K562 (cell line): ENCODE measurements at regions of chr16 and their contacts with region 1.

Region 1: GRCh38 chr16:27154705-27155521 is 48.4 kb upstream of the KDM8 start:
- DNase-seq: peak; percentile 68 to 87 (median 82)
- ATAC-seq: peak; percentile 95
- H3K4me3 ChIP-seq: no peak overlapping the region
- H3K27ac ChIP-seq: no peak overlapping the region
- H3K4me1 ChIP-seq: no peaks in the 10 kb centered on the region
- H3K27me3 ChIP-seq: peaks cover 0 to 15% of the 10 kb centered on the region in 2 experiments; a peak in 2 of 5 replicates
- CTCF ChIP-seq: peak; percentile 86 to 92 (median 87)
- EP300 ChIP-seq: no peak
- POLR2A ChIP-seq: no peak
- RAD21 ChIP-seq: peak; percentile 65 to 84

Region 2: DNA sequence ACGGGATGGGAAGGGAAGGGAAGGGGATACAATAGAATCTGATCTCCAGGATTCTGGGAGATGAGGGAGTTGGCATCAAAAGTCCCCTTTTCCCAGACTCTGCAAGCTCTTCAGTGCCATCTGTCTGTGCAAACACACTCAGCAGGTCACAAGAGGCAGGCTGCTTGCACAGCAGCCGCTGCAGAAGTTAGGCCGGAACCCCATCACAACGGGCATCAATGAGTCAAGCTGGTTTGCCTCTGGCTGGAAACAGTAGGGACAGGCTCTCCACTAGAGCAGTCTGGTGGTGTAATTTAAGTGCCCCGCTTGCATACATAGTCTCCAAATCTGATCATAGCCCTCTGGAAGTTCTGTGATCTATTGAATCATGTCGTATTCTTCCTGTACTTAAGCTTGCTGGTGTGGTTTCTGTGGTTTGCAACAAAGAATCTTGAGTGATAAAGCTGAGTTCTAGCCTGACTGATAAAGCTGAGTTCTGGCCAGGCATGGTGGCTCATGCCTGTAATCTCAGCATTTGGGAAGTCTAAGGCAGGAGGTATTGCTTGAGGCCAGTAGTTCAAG is 14.7 kb after region 1 on chr16:
- CTCF ChIA-PET with region 1: no interaction called
- POLR2A ChIA-PET with region 1: no interaction called
- in situ Hi-C with region 1: no loop called
- intact Hi-C with region 1: no loop called
- DNase-seq: no peak
- ATAC-seq: no peak
- H3K4me3 ChIP-seq: no peak overlapping the region
- H3K27ac ChIP-seq: no peak overlapping the region
- H3K4me1 ChIP-seq: no peaks in the 10 kb centered on the region; a peak in 1 of 5 replicates
- H3K27me3 ChIP-seq: peaks cover 2 to 29% of the 10 kb centered on the region in 2 experiments; a peak in 4 of 5 replicates
- CTCF ChIP-seq: 0 out of 6 replicates have a peak, but pooled peaks of 2 of the 3 experiments have one; percentile 17 to 18
- EP300 ChIP-seq: no peak
- POLR2A ChIP-seq: no peak
- RAD21 ChIP-seq: no peak

Region 3: DNA sequence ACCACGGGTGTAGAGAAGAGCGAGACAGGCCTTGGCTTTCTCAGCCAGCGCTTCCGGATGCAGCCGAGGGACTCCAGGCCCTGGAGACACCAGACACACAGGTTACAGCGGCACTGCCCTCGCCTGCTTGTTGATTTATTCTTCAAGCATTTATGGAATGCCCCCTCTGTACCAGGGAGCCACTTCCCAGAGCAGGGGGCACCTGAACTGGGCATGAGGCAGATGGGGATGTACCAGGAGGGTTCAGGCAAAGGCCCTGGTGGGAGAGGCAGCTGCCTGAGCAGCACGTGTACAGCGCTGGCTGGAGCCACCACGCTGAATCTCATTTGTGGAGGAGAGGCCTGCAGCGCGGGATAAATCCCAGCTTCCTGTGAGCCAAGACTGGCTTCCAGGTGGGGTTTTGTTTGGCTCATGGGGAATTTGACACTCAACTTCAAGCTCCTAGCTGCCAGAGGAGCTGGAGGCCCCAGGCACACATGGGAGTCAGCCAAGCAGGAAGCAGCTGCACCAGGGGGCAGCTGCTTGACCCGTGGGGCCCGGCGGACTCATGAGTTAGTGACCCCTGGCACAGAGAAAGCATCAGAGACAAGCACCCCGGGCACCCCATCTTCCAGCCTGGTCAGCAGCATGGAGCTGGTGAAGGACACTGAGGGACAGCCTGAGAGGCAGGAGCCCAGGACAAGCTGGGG is 306.7 kb after region 1 on chr16:
- CTCF ChIA-PET with region 1: interaction called, 12 read pairs
- POLR2A ChIA-PET with region 1: no interaction called
- in situ Hi-C with region 1: no loop called
- intact Hi-C with region 1: no loop called
- DNase-seq: no peak
- ATAC-seq: no peak
- H3K4me3 ChIP-seq: no peak overlapping the region
- H3K27ac ChIP-seq: no peak overlapping the region
- H3K4me1 ChIP-seq: peaks cover 0 to 7% of the 10 kb centered on the region in 2 experiments; a peak in 2 of 5 replicates
- H3K27me3 ChIP-seq: no peaks in the 10 kb centered on the region
- CTCF ChIP-seq: no peak
- EP300 ChIP-seq: no peak
- POLR2A ChIP-seq: no peak
- RAD21 ChIP-seq: no peak

Region 4: GRCh38 chr16:27481282-27481934 is 326.5 kb after region 1 on chr16:
- CTCF ChIA-PET with region 1: no interaction called
- POLR2A ChIA-PET with region 1: no interaction called
- in situ Hi-C with region 1: no loop called
- intact Hi-C with region 1: no loop called
- DNase-seq: no peak
- ATAC-seq: no peak
- H3K4me3 ChIP-seq: no peak overlapping the region
- H3K27ac ChIP-seq: no peak overlapping the region
- H3K4me1 ChIP-seq: no peaks in the 10 kb centered on the region
- H3K27me3 ChIP-seq: no peaks in the 10 kb centered on the region
- CTCF ChIP-seq: no peak
- EP300 ChIP-seq: no peak
- POLR2A ChIP-seq: no peak
- RAD21 ChIP-seq: no peak